PC-3 (cell line): ENCODE measurements at regions of chr5 and their contacts with region 1.

Region 1: DNA sequence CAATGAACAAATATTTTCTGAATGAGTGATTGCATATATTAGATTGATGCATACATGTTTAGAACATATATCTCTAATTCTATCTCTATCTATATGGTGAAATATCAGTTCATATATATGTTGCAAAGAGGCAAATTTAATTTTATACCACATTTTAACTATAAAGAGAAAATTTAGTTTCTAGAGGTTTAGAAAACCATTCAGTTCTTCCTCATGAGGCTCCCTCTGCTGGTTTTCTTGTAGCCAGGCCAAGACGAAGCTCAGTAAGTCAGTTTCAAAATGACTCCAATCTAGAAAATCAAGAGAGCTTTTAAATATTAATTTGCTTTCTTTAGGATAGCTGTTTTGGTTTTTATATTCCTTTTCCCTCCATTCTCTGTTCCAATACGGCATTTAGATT is 312.1 kb downstream of the TMEM232 start:
- DNase-seq: peak; percentile 31
- ATAC-seq: no peak
- H3K4me3 ChIP-seq: no peak overlapping the region
- H3K27ac ChIP-seq: no peak overlapping the region
- H3K4me1 ChIP-seq: no peaks in the 10 kb centered on the region
- H3K27me3 ChIP-seq: no peaks in the 10 kb centered on the region
- CTCF ChIP-seq: peak; percentile 68

Region 2: DNA sequence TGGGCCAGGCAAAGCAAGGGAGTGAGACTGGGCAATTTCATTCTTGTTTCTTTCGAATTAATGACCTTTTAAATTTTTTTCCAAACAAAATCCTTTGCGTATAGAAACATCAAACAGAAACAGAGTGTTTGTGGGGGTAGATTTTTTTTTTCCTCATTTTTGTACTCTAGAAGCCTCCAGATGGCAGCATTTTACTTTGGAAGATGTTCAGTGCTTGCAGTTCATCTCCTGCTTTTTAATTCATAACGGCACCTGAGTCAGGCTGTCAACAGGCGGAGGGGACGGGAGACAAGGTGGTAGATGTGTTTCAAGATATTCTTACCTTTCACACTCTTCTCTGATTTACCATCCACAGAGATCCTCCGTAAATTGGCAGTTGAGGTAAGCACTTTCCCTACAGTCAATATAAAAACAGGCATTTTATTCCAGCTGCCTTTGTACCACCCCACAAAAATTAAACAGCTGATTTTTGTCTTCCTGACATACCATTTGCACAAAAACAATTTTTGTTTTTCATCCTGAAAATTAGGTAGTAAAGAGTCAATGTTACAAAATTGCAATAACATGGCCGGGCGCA is 1932.9 kb before region 1 on chr5:
- CTCF ChIA-PET with region 1: no interaction called
- POLR2A ChIA-PET with region 1: no interaction called
- intact Hi-C with region 1: loop called (anchors 1 kb)
- DNase-seq: peak; percentile 82
- ATAC-seq: peak; percentile 91
- H3K4me3 ChIP-seq: peak overlapping the region; percentile 22; the same call in 1 of the 2 replicates
- H3K27ac ChIP-seq: no peak overlapping the region
- H3K4me1 ChIP-seq: no peaks in the 10 kb centered on the region
- H3K27me3 ChIP-seq: peaks cover 20% of the 10 kb centered on the region
- CTCF ChIP-seq: peak; percentile 87

Region 3: GRCh38 chr5:109844148-109844547 is 570.2 kb before region 1 on chr5:
- CTCF ChIA-PET with region 1: no interaction called
- POLR2A ChIA-PET with region 1: no interaction called
- intact Hi-C with region 1: loop called (anchors 10 kb)
- DNase-seq: peak; percentile 55
- ATAC-seq: peak; percentile 56
- H3K4me3 ChIP-seq: no peak overlapping the region
- H3K27ac ChIP-seq: no peak overlapping the region
- H3K4me1 ChIP-seq: peaks cover 7% of the 10 kb centered on the region
- H3K27me3 ChIP-seq: no peaks in the 10 kb centered on the region
- CTCF ChIP-seq: peak; percentile 79

Region 4: DNA sequence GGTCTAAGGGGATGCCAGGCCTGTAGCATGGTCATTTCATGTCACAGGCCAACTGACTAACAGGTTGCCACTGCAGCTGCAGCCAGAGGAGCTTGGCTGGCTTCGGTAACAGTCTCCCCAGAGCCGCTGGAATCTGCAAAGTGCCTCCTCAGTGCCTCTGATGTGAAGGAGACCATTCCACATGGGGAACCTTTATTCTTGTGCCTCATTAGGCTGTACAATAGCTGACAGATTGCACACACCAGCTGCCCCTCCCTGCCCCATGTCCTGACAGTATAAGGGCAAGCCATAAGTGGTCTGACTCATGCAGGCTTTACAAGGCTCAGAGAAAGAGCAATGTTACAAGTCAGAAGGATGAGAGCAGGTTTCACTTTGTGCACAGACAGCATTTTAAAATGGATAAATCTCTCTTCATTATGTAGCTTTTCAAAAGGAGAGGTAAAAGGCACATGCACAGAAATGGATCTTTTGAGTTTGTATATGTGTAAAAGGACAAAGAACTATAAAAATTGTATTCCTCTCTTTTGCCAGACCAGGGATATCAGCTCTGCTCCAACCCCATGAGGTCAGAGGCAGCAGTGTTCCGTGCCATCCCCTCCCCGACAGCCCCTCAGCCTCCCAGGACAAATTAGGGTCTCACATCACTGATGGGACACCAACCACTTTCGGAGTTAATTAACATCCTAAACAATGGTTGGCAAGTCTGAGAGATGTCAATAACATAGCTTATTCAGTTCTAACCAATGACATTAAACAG is 155.7 kb before region 1 on chr5:
- CTCF ChIA-PET with region 1: no interaction called
- POLR2A ChIA-PET with region 1: no interaction called
- intact Hi-C with region 1: no loop called
- DNase-seq: peak; percentile 63
- ATAC-seq: peak; percentile 100
- H3K4me3 ChIP-seq: no peak overlapping the region; the same call in 1 of the 2 replicates
- H3K27ac ChIP-seq: no peak overlapping the region
- H3K4me1 ChIP-seq: peaks cover 7% of the 10 kb centered on the region; the same call in 1 of the 2 replicates
- H3K27me3 ChIP-seq: no peaks in the 10 kb centered on the region
- CTCF ChIP-seq: no peak